Activated T-helper 1 cell treated with anti-CD3 and anti-CD28 coated beads, Interleukin-12 subunit alpha, Interleukin-12 subunit beta, Interleukin-2, Interleukin-4 antibody, amounts not matched to agents 30 ng/mL and 10 ng/mL and 1 ng/mL, durations not matched to agents 14 hours and 24 hours and 36 hours (primary cell): ENCODE measurements at regions of chr15 and their contacts with region 1.

Region 1: DNA sequence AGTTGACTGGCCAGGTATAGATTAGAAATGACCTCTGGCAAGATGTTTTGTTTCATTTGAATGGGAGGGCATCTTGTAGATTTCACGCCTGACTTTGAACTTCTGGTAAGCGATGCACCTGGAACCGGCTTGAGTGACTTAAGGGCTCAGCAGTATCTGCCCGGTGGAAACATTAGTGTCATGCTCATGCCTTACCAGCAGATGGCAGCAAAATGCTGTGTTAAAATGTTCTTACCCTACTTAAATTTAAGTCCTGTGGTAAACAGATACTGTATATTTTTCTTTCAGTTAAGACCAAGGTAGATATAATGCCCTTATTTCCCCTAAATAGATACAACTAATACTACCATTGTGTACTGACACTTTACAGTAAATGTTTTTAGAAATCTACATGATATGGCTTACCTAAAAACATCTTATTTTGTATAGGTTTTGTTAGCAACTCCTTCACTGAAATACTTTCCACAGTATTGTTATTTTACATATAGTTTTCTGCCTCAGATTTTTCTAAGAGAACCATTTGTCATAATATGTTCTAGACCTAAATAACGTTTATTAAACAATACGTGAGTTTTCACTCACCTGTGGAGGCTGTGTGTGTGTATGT is 25.5 kb downstream of the ASB7 start:
- DNase-seq: peak; percentile 48
- H3K4me3 Mint-ChIP-seq: no peak overlapping the region
- H3K27ac Mint-ChIP-seq: no peak overlapping the region
- H3K4me1 Mint-ChIP-seq: peaks cover 24% of the 10 kb centered on the region
- H3K27me3 Mint-ChIP-seq: no peaks in the 10 kb centered on the region

Region 2: DNA sequence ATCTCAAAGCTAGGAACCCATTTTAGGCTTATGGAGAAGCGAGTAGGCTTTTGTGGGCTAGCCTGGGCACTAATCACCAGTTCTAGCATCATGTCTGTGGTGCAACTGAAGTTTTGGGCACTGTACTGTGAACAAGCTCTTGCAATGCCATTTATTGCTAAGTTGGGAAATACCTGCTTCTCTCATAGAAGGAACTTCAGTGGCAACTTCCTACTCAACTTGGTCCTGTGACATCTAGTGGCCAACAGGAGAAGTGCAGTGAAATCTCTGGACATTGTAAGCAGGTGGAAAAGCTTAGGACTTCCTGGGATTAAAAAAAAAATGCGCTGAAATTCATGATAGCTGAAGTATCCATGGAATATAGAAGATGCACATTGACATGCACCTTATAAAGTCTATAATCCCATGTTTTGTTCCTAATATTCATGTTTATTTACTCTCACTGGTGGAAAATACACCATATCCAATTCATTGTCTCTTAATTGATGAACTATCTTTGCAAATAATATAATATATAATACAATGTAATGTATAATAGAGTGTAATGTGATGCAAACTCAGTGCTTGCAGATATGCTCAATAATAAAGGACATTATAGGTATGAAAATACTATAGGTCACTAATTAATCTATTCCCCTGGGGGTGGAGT is 245.3 kb after region 1 on chr15:
- intact Hi-C with region 1: loop called (anchors 1 kb)
- DNase-seq: peak; percentile 32
- H3K4me3 Mint-ChIP-seq: no peak overlapping the region
- H3K27ac Mint-ChIP-seq: no peak overlapping the region
- H3K4me1 Mint-ChIP-seq: no peaks in the 10 kb centered on the region
- H3K27me3 Mint-ChIP-seq: peaks cover 35% of the 10 kb centered on the region

Region 3: DNA sequence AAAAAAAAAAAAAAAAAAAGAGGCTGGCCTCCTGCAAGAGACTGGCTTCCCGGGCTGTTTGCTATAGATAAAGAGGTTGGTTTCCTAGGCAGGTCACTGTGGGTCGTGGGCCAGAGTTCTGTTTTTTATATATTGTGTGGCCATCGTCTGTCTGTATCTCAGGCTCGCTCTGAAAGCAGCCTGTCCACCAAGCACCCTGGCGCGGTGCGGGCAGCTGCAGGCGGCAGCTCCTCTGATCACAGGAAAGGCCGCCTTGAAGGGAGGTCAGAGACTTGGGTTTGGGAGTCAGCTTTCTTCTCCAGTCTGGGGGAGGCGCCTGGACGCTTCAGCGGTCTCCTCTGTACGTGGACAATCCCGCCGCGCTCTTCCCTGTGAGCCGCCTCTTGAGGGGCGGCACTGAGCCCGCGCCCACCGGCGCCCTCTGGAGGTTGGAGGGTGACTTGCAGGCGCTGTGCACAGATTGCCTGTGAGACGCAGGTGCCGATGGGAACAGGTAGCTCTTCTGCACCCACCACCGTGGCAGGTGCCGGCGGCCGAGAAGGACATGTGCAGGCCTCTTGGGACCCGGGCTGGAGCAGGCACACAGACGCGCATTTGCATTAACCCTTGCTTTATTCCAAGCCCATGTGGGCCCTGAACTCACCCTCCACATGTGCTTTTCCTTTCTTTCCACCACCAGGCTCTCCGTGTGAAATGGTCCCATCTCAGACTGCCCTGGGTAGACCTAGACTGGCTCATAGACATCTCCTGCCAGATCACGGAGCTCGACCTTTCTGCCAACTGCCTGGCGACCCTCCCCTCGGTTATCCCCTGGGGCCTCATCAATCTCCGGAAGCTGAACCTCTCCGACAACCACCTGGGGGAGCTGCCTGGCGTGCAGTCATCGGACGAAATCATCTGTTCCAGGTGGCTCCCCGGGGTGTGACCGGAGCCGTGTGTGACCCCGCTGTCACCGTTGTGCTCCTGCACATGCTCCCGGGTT is 380.6 kb after region 1 on chr15:
- intact Hi-C with region 1: loop called (anchors 1 kb)
- DNase-seq: peak; percentile 80
- H3K4me3 Mint-ChIP-seq: peak overlapping the region; percentile 89
- H3K27ac Mint-ChIP-seq: peak overlapping the region; percentile 18
- H3K4me1 Mint-ChIP-seq: peaks cover 19% of the 10 kb centered on the region
- H3K27me3 Mint-ChIP-seq: peaks cover 21% of the 10 kb centered on the region